Uterus (tissue), 4 donors: ENCODE measurements at regions of chr20 and their contacts with region 1.

Region 1: DNA sequence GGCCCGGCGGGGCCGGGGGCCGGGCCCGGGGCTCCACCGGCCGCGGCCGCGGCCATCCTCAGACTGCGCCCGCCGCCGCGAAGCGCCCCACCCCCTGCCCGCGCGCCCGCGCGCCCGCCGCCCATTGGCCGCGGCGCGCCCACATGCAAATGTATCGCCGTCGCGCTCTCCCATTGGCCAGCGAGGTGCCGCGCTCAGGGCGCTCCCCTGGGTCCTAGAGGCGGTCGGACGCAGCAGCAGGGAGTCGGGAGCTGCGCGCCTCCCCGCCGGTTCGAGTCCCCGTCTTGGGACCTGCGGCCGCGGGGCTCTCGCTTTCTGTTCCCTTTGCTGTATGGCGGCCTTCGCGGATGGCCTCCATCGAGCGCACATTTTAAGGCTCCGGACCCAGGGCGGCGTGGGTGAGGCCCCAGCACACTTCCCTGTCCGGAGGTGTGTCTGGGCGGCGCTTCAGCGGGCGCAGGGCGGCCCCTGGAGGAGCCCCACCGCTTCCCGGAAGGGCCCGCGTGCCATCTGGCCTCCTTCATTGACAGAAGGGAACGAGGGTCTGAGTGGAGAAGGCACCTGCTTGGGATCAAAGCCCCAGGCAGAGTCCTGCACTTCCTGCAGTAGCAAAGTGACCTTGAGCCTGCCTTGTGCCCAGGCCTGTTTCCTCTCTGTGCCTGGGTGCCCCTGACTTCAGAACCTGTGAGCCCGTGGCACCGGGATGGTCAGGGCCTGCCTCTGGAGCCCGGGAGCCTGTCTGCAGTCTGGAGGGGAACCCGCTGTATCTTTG is at the start of gene CABLES2:
- DNase-seq: peak; percentile 91 to 93
- H3K4me3 ChIP-seq: peak within 1 kb of the TSS; percentile 45 to 65
- H3K27ac ChIP-seq: peak within 1 kb of the TSS; percentile 73 to 75
- H3K4me1 ChIP-seq: peaks cover 0 to 28% of the 10 kb centered on the region in 2 donors
- H3K27me3 ChIP-seq: no peaks in the 10 kb centered on the region
- CTCF ChIP-seq: peak in 3 of 4 experiments; percentile 31 to 67 (median 47)
- POLR2A ChIP-seq: peak in 1 of 2 donors; percentile 46
- total RNA-seq, gene CABLES2: 0.29 to 10.6 (median 2.6) TPM

Region 2: DNA sequence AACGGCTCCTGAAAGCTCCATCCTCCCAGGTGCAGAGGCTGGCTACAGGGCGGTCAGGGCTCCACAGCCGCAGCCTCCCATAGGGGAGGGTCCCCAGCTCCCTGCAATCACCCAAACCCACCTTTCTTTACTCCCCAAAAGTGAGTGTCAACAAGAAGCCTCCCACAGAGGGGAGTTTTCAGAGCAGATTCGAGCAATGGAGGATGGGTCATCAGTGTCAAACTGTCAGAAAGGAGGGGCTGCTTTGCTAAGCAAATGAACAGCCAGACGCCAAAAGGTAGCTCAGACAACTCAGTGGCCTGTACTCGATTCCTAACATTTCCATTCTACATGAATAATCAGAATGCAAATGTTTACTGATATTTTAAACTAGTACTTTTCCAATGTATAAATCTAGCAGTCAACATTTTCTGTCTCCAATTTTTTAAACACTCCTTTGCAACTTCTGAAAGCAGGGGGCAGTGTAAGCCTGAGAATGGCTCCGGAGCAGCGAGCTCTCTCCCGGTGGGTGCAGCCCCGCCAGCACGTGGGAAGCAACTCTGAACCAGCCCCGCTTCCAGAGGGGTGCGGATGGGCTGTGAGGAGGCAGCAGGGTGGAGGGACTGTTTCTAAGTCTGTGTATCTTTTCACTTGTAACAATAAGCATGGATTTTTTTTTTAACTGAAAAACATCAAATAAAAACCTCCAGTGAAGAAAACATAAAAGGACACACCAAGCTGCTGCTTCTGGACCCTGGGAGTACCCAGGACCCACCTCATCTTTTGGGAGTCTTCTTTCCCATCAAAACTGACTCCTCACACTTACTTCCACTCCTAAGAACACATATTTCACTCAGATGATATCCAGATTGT is 396.6 kb before region 1 on chr20:
- intact Hi-C with region 1: loop called (anchors 10 kb)
- DNase-seq: peak; percentile 53 to 55
- H3K4me3 ChIP-seq: no peak overlapping the region
- H3K27ac ChIP-seq: no peak overlapping the region
- H3K4me1 ChIP-seq: peaks cover 0 to 8% of the 10 kb centered on the region in 2 donors
- H3K27me3 ChIP-seq: no peaks in the 10 kb centered on the region
- CTCF ChIP-seq: peak; percentile 58 to 80 (median 74)
- POLR2A ChIP-seq: no peak

Region 3: DNA sequence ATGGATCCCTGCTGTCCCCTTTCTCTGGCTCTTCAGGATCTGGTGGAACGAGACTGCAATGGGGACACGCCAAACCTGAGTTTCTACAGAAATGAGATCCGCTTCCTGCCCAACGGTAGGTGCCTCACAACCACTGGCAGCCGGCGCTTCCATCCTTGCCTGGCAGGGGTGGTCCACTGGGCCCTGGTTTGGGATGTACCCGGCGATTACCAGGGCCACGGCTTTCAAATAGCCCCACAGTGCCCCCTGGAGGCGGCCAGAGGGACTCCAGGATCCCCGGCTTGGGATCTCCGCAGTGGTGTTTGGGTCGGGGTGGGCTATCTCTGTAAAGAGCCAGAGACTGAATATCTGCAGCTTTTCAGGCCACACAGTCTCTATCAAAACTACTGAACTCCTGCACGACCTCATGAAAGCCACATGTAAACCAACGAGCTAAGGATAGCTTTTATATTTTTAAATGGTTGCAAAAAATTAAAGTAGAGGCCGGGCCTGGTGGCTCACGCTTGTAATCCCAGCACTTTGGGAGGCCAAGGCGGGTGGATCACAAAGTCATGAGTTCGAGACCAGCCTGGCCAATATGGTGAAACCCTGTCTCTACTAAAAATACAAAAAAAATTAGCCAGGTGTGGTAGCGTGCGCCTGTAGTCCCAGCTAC is 400.9 kb after region 1 on chr20:
- intact Hi-C with region 1: loop called (anchors 10 kb)
- DNase-seq: peak; percentile 70 to 72
- H3K4me3 ChIP-seq: no peak overlapping the region
- H3K27ac ChIP-seq: no peak overlapping the region
- H3K4me1 ChIP-seq: peaks cover 0 to 25% of the 10 kb centered on the region in 2 donors
- H3K27me3 ChIP-seq: no peaks in the 10 kb centered on the region
- CTCF ChIP-seq: peak; percentile 79 to 94 (median 88)
- POLR2A ChIP-seq: no peak